Astrocyte of the spinal cord (primary cell): ENCODE measurements at regions of chr2 and their contacts with region 1.

Region 1: GRCh38 chr2:174341286-174341994 is 6.7 kb downstream of the SP9 start:
- DNase-seq: peak; percentile 92
- H3K4me3 ChIP-seq: no peak overlapping the region
- CTCF ChIP-seq: peak; percentile 97

Region 2: GRCh38 chr2:173402405-173402974 is 939.0 kb before region 1 on chr2:
- in situ Hi-C with region 1: loop called (anchors 25 kb)
- DNase-seq: peak; percentile 82
- H3K4me3 ChIP-seq: no peak overlapping the region
- CTCF ChIP-seq: peak; percentile 83